Transverse colon (tissue), 4 donors: ENCODE measurements at regions of chr7 and their contacts with region 1.

Region 1: DNA sequence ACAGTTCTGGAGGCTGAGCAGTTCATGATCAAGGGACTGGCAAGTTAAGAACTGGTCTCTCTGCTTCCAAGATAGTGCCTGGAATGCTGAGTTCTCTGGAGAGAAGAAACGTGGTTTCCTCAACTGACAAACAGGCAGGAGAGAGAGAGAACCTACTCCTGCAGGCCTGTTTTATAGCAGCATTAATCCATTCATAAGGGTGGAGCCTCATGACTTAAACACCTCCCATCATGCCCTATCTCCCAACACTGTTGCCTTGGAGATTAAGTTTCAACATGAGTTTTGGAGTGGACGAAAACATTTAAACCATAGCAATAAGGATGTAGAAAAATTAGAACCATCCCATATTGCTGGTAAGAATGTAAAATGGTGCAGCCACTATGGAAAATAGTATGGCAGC is 32.3 kb upstream of the IMMP2L start:
- DNase-seq: no peak
- H3K4me3 ChIP-seq: no peak overlapping the region
- H3K27ac ChIP-seq: no peak overlapping the region
- H3K4me1 ChIP-seq: no peaks in the 10 kb centered on the region
- H3K27me3 ChIP-seq: no peaks in the 10 kb centered on the region
- CTCF ChIP-seq: no peak
- EP300 ChIP-seq: no peak
- POLR2A ChIP-seq: no peak

Region 2: GRCh38 chr7:110988890-110989501 is 605.6 kb before region 1 on chr7:
- in situ Hi-C with region 1: no loop called
- intact Hi-C with region 1: loop called (anchors 5 kb)
- DNase-seq: no peak
- H3K4me3 ChIP-seq: no peak overlapping the region
- H3K27ac ChIP-seq: no peak overlapping the region
- H3K4me1 ChIP-seq: no peaks in the 10 kb centered on the region
- H3K27me3 ChIP-seq: no peaks in the 10 kb centered on the region
- CTCF ChIP-seq: no peak
- EP300 ChIP-seq: no peak
- POLR2A ChIP-seq: no peak

Region 3: DNA sequence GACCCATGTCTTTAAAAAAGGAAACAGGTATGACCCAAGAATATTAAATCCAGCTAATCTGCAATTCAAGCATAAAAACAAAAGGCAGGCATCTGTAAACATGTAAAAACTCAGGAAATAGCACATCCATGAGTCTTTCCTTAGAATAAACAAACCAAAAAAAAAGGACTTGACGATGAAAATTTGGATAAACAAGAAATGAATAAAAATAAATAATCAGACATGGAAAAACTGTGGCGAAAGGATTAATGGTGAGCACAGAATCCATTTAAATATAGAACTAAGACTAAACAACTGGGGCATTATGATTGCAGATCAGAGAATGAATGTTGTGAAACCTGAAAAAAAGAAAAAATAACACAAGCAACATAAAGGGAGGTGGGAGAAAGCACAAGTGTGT is 441.5 kb after region 1 on chr7:
- in situ Hi-C with region 1: no loop called
- intact Hi-C with region 1: no loop called
- DNase-seq: no peak
- H3K4me3 ChIP-seq: no peak overlapping the region
- H3K27ac ChIP-seq: no peak overlapping the region
- H3K4me1 ChIP-seq: no peaks in the 10 kb centered on the region
- H3K27me3 ChIP-seq: no peaks in the 10 kb centered on the region
- CTCF ChIP-seq: no peak
- EP300 ChIP-seq: no peak
- POLR2A ChIP-seq: no peak